ENCODE measurements at regions of chr2 and their contacts with region 1.

Region 1: DNA sequence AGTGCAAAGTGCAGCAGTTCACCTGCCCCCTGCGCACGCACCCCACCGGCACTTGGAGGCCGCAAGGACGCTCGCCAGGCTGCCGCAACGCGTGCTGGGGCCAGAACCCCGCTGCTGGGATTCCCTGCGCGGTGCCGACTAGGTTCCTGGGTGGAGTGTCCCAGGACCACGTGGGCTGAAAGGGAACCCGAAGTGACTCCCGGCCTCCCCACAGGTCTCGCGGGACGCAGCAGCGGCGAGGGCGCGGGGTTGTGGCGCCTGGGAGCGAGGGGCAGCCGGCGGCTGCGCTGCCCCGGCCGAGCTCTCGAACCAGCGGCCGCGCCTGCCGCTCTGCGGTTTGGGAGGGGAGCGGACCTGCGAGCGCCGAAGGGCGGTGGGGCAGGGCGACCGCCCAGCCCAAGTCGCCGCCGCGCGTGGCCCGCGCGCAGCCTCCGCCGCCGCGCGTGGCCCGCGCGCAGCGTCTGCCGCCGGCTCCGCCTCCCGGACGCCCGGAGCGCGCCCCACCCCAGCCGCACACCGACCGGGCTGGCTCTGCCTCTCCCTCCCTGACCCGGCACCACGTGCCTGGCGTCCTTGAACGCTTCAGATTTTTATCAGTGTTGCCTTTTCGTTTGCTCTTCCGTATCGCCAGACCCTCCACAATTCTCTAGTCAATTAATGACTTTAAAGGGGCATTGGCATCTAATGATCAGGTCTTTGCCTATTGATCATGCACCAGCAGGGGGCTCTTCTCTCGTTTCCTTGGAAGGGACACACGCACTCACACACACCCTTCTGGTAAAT is at the start of gene FTCDNL1:
- DNase-seq: no peak
- total RNA-seq, gene FTCDNL1: 2.3 TPM

Region 2: GRCh38 chr2:199704358-199705238 is 146.3 kb before region 1 on chr2:
- intact Hi-C with region 1: loop called (anchors 10 kb)
- DNase-seq: no peak